Calu3 (cell line): ENCODE measurements at regions of chr6 and their contacts with region 1.

Region 1: GRCh38 chr6:24774696-24775519 is at the start of gene GMNN:
- DNase-seq: peak; percentile 100
- H3K4me3 Mint-ChIP-seq: peak within 1 kb of the TSS; percentile 96
- H3K27ac Mint-ChIP-seq: peak within 1 kb of the TSS; percentile 89
- H3K4me1 Mint-ChIP-seq: peaks cover 13% of the 10 kb centered on the region
- H3K27me3 Mint-ChIP-seq: no peaks in the 10 kb centered on the region
- CTCF ChIP-seq: no peak
- total RNA-seq, gene GMNN: 183 and 200 TPM in 2 replicates

Region 2: DNA sequence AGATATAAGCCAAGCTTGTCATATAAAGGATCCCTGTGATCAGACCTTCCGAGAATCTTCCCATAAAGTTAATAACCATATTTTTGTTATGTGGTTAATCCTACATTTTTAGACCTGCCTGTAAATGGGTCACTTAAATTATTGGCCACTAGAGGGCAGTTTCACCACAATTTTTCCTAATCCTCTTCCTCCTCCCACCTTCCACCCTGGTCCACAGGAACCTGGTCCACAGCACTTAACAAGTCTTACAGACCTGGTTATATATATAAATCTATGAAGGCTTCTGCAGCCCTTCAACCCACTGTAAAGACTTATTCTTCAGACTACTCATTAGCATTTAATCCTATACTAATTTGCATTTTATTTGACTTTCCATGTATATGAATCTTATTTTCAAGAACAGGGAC is 343.9 kb before region 1 on chr6:
- CTCF ChIA-PET with region 1: no interaction called
- intact Hi-C with region 1: loop called (anchors 10 kb)
- DNase-seq: peak; percentile 58
- H3K4me3 Mint-ChIP-seq: no peak overlapping the region
- H3K27ac Mint-ChIP-seq: no peak overlapping the region
- H3K4me1 Mint-ChIP-seq: peaks cover 9% of the 10 kb centered on the region
- H3K27me3 Mint-ChIP-seq: no peaks in the 10 kb centered on the region
- CTCF ChIP-seq: peak; percentile 93

Region 3: DNA sequence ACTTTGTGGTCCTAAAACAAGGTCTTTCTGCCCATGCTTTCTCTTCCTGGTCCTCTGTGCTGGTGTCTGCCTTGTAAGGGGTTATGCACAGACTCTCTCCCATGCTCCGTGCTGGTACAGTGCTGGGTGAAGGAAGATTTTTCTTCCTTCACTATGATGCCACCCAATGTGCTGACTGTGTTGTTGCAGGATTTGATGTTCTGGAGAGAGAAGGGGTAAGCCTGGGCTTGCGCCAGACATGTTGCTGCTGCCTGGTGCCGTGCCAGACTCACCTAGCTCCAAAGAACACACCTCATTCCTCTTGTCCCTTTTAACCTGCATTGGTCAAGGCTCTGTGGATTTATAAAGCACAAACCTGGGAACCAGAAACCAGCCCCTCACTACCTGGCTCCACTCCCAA is 52.3 kb after region 1 on chr6:
- CTCF ChIA-PET with region 1: interaction called, 3 read pairs
- intact Hi-C with region 1: loop called (anchors 2 kb)
- DNase-seq: peak; percentile 54
- H3K4me3 Mint-ChIP-seq: no peak overlapping the region
- H3K27ac Mint-ChIP-seq: peak overlapping the region; percentile 58
- H3K4me1 Mint-ChIP-seq: peaks cover 40% of the 10 kb centered on the region
- H3K27me3 Mint-ChIP-seq: no peaks in the 10 kb centered on the region
- CTCF ChIP-seq: no peak

Region 4: GRCh38 chr6:24855395-24856245 is 80.7 kb after region 1 on chr6:
- CTCF ChIA-PET with region 1: no interaction called
- intact Hi-C with region 1: loop called (anchors 1 kb)
- DNase-seq: peak; percentile 81
- H3K4me3 Mint-ChIP-seq: no peak overlapping the region
- H3K27ac Mint-ChIP-seq: no peak overlapping the region
- H3K4me1 Mint-ChIP-seq: peaks cover 29% of the 10 kb centered on the region
- H3K27me3 Mint-ChIP-seq: no peaks in the 10 kb centered on the region
- CTCF ChIP-seq: peak; percentile 94

Region 5: GRCh38 chr6:25070547-25071366 is 295.8 kb after region 1 on chr6:
- CTCF ChIA-PET with region 1: interaction called, 4 read pairs
- intact Hi-C with region 1: loop called (anchors 2 kb)
- DNase-seq: peak; percentile 94
- H3K4me3 Mint-ChIP-seq: no peak overlapping the region
- H3K27ac Mint-ChIP-seq: no peak overlapping the region
- H3K4me1 Mint-ChIP-seq: no peaks in the 10 kb centered on the region
- H3K27me3 Mint-ChIP-seq: peaks cover 27% of the 10 kb centered on the region
- CTCF ChIP-seq: peak; percentile 100